Motor neuron (in vitro differentiated cells): ENCODE measurements at regions of chr7 and their contacts with region 1.

Region 1: GRCh38 chr7:102272075-102272917 is 14.4 kb upstream of the SH2B2 start:
- ATAC-seq: peak; percentile 74 to 98 (median 82)
- H3K4me3 ChIP-seq: no peak overlapping the region
- H3K27ac ChIP-seq: no peak overlapping the region
- H3K4me1 ChIP-seq: peaks cover 3 to 6% of the 10 kb centered on the region in 2 donors

Region 2: DNA sequence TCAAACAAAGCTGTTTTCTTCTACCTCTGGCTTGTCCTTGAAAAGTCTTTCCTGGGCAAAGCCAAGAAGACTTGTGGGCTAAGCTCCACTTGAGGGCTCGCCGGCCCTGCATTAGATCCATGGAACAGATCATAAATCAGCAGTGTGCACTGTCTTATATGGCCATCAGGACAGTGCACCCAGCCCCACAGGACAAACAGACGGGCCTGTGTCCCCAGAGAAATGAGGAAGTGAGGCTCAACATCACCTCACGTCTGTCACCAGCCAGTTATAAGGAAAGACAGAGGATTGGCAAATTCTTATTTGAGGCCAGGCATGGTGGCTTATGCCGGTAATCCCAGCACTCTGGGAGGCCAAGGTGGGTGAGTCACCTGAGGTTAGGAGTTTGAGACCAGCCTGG is 938.4 kb before region 1 on chr7:
- in situ Hi-C with region 1: loop called in 1 of 9 experiments (anchors 25 kb)
- ATAC-seq: no peak
- H3K4me3 ChIP-seq: no peak overlapping the region
- H3K27ac ChIP-seq: no peak overlapping the region
- H3K4me1 ChIP-seq: no peaks in the 10 kb centered on the region